ENCODE measurements at regions of chr11 and their contacts with region 1.

Region 1: GRCh38 chr11:518463-519250 is 11.6 kb upstream of the RNH1 start:
- DNase-seq: peak; percentile 93 to 97
- ATAC-seq: peak; percentile 99
- H3K4me3 ChIP-seq: peak overlapping the region; percentile 28; the same call in 2 of the 3 replicates
- H3K27ac ChIP-seq: peak overlapping the region; percentile 82 to 94
- H3K4me1 ChIP-seq: peaks cover 5% of the 10 kb centered on the region; the same call in 1 of the 3 replicates
- CTCF ChIP-seq: peak; percentile 100
- EP300 ChIP-seq: no peak
- POLR2A ChIP-seq: peak; percentile 52
- RAD21 ChIP-seq: peak; percentile 68 to 89

Region 2: DNA sequence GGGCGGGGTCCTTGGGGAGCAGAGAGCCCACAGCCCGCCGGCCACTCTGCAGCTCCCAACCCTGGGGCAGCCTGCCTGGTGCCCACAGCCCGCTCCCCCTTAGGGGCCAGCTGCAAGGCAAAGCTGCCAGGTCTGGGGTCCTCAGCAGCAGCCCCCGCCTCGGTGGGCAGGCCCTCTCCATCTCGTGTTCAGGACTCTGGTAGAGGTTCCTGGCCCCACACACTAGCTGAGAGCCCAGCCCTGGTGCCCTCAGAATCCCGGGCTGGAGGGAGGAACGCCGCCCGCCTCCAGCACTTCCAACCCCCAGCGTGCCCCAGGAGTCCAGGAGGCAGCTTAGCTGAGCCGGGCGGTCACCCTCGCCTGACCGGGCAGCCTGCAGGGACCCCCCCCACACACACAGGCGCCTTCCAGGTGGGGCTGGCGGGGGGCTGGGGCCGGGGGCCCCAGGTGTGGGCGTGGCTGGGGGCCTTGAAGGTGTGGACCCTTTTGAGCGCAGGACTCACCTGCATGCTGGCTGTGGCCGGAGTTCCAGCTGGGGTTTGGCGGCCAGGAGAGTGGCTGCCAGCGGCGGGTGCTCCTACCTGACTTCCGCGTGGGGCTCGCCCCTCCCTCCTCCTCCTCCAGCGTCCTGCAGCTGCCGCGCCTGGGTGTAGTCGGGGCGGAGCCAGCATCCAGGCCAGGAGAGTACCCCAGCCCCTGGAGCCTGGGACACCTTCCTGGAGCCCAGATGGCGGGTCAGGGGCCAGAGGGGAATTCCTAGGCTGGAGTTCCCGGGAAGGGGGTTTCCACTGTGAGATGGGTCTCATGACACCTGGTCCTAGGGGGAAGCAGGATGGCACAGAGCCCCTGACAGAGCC is 77.0 kb before region 1 on chr11 and contains the start of gene ANO9:
- CTCF ChIA-PET with region 1: interaction called, 12 read pairs
- POLR2A ChIA-PET with region 1: no interaction called
- DNase-seq: no peak
- ATAC-seq: peak in 1 of 2 experiments; percentile 37; a peak in 3 of 6 replicates
- H3K4me3 ChIP-seq: no peak within 1 kb of the TSS
- H3K27ac ChIP-seq: peak within 1 kb of the TSS in 1 of 2 experiments; percentile 74; a peak in 3 of 6 replicates
- H3K4me1 ChIP-seq: peaks cover 4% of the 10 kb centered on the region; the same call in 1 of the 3 replicates
- CTCF ChIP-seq: no peak
- EP300 ChIP-seq: no peak
- POLR2A ChIP-seq: no peak
- RAD21 ChIP-seq: no peak
- polyA plus RNA-seq, gene ANO9: 0.66 and 0.70 TPM in 2 replicates

Region 3: DNA sequence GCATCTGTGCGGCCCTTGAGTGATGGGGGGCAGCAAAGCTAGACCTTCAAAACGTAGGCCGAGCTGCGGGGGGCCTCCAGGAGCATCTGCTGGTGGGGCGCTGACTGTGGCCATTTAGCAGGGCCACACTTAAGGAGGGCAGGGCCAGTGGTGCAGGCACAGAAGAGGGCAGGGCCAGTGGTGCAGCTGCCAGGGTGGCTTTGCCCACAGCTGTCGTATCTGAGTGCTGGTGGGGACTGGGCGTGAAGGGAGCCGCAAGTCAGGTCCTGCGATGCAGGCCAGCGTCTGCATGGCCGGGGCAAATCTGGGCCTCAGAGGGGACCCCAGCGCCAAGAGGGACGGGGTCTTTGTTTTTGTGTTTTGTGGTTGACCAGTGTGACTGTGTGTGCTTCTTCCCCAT is 39.3 kb before region 1 on chr11:
- CTCF ChIA-PET with region 1: interaction called, 14 read pairs
- POLR2A ChIA-PET with region 1: no interaction called
- DNase-seq: no peak
- ATAC-seq: no peak
- H3K4me3 ChIP-seq: no peak overlapping the region
- H3K27ac ChIP-seq: no peak overlapping the region
- H3K4me1 ChIP-seq: no peaks in the 10 kb centered on the region
- CTCF ChIP-seq: no peak
- EP300 ChIP-seq: no peak
- POLR2A ChIP-seq: no peak
- RAD21 ChIP-seq: no peak

Region 4: GRCh38 chr11:488999-489398 is 29.7 kb before region 1 on chr11:
- CTCF ChIA-PET with region 1: interaction called, 10 read pairs
- POLR2A ChIA-PET with region 1: no interaction called
- DNase-seq: no peak
- ATAC-seq: peak in 1 of 2 experiments; percentile 24; a peak in 3 of 6 replicates
- H3K4me3 ChIP-seq: no peak overlapping the region
- H3K27ac ChIP-seq: no peak overlapping the region
- H3K4me1 ChIP-seq: no peaks in the 10 kb centered on the region
- CTCF ChIP-seq: no peak
- EP300 ChIP-seq: no peak
- POLR2A ChIP-seq: no peak
- RAD21 ChIP-seq: no peak

Region 5: DNA sequence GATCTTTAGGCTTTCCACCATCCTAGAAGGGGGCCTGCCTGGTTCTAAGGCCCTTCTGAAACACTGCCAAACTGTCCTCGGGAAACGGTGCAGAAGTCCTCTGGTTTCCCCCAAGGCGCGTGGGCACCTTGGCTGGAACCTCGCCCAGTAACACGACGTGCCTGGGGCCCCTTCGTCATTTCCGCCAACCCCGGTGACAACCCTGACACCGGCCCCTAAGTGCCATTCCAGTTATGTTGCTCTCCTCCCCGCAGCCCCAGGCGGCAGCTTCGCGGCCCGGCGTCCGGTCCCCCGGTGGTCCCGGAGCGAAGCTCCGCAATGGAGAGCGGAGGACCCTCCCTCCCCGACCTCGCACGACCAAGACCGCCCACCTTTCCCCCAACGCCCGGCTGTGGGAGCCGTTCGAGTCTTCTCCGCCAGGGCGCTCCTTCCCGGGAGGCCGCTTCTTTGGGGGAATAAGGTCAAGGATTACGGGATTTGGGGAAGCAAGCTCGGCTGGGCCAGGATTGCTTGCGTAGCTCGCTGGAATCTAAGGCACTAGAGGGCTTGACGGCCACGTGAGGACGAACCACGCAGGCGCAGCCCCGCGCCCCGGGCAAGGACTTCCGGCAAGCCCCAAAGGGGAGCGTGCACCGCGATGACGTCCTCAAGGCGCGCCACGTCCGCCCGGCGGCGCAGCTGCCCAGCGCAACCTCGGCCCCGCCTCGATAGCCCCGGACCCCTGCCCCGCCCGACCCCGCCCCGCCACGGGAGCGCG is 12.2 kb before region 1 on chr11:
- CTCF ChIA-PET with region 1: interaction called, 55 read pairs
- POLR2A ChIA-PET with region 1: interaction called, 5 read pairs
- DNase-seq: peak; percentile 96 to 99
- ATAC-seq: peak; percentile 77 to 83
- H3K4me3 ChIP-seq: peak overlapping the region; percentile 83
- H3K27ac ChIP-seq: peak overlapping the region; percentile 97
- H3K4me1 ChIP-seq: peaks cover 15% of the 10 kb centered on the region; the same call in 2 of the 3 replicates
- CTCF ChIP-seq: no peak
- EP300 ChIP-seq: no peak
- POLR2A ChIP-seq: no peak; the same call in 1 of the 2 replicates
- RAD21 ChIP-seq: no peak

Region 6: DNA sequence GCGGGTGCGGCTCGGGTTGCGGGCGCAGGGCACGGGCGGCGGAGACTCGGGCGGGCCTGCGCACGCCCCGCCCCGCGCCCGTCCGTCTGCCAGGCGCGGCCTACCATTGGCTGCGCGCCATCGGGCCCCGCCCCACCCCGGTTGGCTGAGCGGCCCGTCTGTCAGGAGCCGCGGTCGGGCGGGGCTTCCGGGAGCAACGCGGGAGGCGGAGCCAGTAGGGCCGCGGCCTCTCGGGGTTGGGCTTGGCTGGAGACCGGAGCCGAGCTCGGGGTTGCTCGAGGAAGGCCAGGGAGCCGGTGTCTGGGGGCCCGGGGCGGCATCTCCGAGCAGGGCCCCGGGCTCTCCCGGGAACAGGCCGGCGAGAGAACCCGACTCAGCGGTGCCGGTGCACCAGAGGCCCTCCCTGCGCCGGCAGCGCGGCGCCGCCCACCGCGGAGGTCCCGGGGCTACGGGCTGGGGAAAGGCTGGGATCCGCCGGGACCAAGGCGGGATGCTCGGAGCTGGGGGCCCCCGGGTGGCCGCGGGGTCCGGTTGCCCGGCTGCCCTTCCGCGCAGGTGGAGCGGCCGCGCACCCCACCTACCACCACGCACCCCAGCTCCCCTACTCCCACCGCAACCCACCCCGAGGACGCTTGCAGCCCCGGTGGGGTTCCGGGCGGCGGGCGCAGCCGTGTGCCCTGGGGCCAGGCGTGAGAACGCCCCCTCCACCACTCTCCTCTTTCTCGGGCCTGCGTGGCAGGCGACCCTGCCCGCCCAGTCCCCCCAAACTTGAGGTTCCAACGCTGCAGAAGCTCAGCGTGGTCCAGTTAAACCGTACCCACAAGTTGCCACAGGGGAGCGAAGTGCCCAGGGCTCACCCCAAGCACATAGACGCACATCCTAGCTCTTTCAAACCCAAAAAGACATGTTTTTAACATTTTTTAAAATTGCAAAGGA is 17.1 kb after region 1 on chr11 and contains the start of gene HRAS:
- CTCF ChIA-PET with region 1: interaction called, 40 read pairs
- POLR2A ChIA-PET with region 1: no interaction called
- DNase-seq: peak; percentile 95 to 99
- ATAC-seq: peak; percentile 74 to 94
- H3K4me3 ChIP-seq: peak within 1 kb of the TSS; percentile 89
- H3K27ac ChIP-seq: peak within 1 kb of the TSS; percentile 95 to 98
- H3K4me1 ChIP-seq: peaks cover 12% of the 10 kb centered on the region
- CTCF ChIP-seq: no peak
- EP300 ChIP-seq: no peak
- POLR2A ChIP-seq: peak; percentile 79
- RAD21 ChIP-seq: no peak
- polyA plus RNA-seq, gene HRAS: 56.3 and 63.3 TPM in 2 replicates

Region 7: DNA sequence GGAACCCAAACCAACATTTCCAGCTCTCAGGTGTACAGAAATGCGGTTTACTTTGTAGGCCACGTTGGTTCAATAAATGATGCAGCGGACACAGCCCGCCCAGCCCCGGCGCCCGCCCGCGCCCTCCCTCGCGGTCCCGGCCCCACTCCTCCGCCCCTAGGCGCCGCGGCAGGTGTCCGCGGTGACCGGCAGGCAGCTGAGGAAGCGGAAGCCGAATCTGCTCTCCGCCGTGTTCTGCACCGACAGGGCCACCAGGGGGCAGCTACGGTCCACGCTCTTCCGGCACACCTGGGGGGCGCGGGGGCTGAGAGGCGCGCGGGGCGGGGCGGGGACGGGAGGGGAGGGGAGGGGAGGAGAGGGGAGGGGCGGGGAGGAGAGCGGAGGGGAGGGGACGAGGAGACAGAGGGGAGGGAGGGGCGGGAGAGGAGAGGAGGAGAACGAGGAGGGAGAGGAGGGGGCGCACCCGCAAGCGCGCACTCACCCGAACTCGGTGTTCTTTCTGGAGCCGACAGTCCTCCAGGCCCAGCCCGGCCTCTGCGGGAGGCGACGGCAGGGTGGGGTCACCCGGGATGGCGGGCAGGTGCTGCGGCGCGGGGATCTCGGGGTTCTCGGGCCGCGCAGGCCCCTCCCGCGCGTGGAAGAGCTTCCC is 36.3 kb after region 1 on chr11:
- CTCF ChIA-PET with region 1: interaction called, 10 read pairs
- POLR2A ChIA-PET with region 1: no interaction called
- DNase-seq: peak; percentile 69 to 81
- ATAC-seq: peak; percentile 48 to 72; a peak in 5 of 6 replicates
- H3K4me3 ChIP-seq: peak overlapping the region; percentile 67
- H3K27ac ChIP-seq: peak overlapping the region; percentile 81 to 88
- H3K4me1 ChIP-seq: peaks cover 22% of the 10 kb centered on the region
- CTCF ChIP-seq: peak; percentile 52
- EP300 ChIP-seq: no peak
- POLR2A ChIP-seq: no peak
- RAD21 ChIP-seq: peak; percentile 71 to 84

Measured in A549 (cell line).